Spleen (tissue), 13 donors: ENCODE measurements at regions of chr21 and their contacts with region 1.

Region 1: GRCh38 chr21:44338971-44339910 is at the start of gene CFAP410:
- DNase-seq: peak; percentile 98
- H3K4me3 ChIP-seq: peak within 1 kb of the TSS; percentile 49 to 82 (median 61)
- H3K27ac ChIP-seq: peak within 1 kb of the TSS; percentile 93 to 98 (median 95)
- H3K4me1 ChIP-seq: peaks cover 9 to 31% (median 18%) of the 10 kb centered on the region in 6 donors
- H3K27me3 ChIP-seq: no peaks in the 10 kb centered on the region
- CTCF ChIP-seq: peak in 3 of 11 experiments; percentile 19 to 26 (median 20)
- POLR2A ChIP-seq: peak; percentile 86 to 93 (median 92)
- total RNA-seq, gene CFAP410: 26.2 to 34.3 (median 32.3) TPM

Region 2: DNA sequence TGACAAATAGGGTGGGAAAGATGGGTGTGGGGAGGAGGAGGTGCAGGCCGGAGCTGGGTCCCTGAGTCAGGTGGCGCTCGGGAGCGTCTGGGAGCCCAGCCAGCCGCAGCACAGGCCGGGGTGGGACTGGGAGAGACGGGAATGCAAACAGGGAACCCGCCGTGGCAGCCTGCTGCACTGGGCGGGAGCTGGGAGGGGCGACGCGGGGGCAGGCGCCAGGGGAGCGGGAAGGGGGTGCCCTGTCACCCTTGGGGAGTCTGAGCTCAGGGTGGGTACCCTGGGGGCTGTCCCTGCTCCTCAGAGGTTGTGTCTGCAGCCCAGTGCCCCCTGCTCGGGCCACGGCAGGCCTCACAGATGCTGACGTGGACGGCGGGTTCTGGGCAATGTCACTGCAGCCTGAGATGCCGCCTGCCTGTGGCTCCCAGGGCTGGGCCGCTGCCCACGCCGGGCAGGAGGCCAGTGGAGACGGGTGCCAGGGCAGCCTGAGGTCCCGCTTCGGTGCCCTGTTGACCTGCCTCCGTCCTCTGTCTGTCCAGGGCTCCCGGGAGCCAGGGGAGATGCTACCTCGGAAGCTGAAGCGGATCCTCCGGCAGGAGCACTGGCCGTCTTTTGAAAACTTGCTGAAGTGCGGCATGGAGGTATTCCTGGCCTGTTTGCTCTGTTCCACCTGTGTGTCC is 99.4 kb after region 1 on chr21:
- intact Hi-C with region 1: loop called (anchors 10 kb)
- DNase-seq: peak; percentile 59
- H3K4me3 ChIP-seq: no peak overlapping the region
- H3K27ac ChIP-seq: no peak overlapping the region
- H3K4me1 ChIP-seq: peaks cover 0 to under 1% (median 0%) of the 10 kb centered on the region in 6 donors
- H3K27me3 ChIP-seq: peaks cover 0 to 4% (median 0%) of the 10 kb centered on the region in 7 donors
- CTCF ChIP-seq: no peak
- POLR2A ChIP-seq: no peak